Heart left ventricle (tissue), 16 donors: ENCODE measurements at regions of chr1 and their contacts with region 1.

Region 1: DNA sequence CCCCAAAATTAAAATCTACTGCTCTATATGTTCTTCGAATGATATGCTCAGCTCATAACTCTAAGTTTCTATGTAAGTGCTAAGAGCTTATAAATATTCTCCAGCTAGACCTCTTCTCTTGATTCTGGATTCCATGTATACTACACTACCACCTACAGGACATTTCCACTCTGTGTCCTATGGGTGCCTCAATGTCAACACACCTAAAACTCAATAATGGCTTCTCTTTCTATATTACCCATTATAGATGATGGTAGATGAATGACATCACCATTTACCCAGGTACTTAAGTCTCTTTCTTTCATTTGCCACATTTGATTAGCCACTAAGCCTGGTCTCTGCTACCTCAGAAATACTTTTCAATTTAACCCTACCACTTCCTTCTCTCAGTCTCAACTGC is 41.3 kb downstream of the TBX19 start:
- DNase-seq: no peak
- ATAC-seq: peak in 2 of 4 donors; percentile 48 to 53
- H3K4me3 ChIP-seq: no peak overlapping the region
- H3K27ac ChIP-seq: no peak overlapping the region
- H3K4me1 ChIP-seq: peaks cover 0 to 12% (median 0%) of the 10 kb centered on the region in 12 donors
- H3K27me3 ChIP-seq: no peaks in the 10 kb centered on the region
- CTCF ChIP-seq: peak in 10 of 12 donors; percentile 14 to 45 (median 31)
- POLR2A ChIP-seq: no peak

Region 2: GRCh38 chr1:168092566-168093355 is 229.2 kb before region 1 on chr1:
- intact Hi-C with region 1: loop called in 3 of 10 experiments (anchors 5 to 10 kb)
- DNase-seq: no peak
- ATAC-seq: peak in 1 of 4 donors; percentile 45
- H3K4me3 ChIP-seq: no peak overlapping the region
- H3K27ac ChIP-seq: no peak overlapping the region
- H3K4me1 ChIP-seq: peaks cover 0 to 7% (median 0%) of the 10 kb centered on the region in 12 donors
- H3K27me3 ChIP-seq: no peaks in the 10 kb centered on the region
- CTCF ChIP-seq: peak in 8 of 12 donors; percentile 8 to 44 (median 26)
- POLR2A ChIP-seq: no peak

Region 3: DNA sequence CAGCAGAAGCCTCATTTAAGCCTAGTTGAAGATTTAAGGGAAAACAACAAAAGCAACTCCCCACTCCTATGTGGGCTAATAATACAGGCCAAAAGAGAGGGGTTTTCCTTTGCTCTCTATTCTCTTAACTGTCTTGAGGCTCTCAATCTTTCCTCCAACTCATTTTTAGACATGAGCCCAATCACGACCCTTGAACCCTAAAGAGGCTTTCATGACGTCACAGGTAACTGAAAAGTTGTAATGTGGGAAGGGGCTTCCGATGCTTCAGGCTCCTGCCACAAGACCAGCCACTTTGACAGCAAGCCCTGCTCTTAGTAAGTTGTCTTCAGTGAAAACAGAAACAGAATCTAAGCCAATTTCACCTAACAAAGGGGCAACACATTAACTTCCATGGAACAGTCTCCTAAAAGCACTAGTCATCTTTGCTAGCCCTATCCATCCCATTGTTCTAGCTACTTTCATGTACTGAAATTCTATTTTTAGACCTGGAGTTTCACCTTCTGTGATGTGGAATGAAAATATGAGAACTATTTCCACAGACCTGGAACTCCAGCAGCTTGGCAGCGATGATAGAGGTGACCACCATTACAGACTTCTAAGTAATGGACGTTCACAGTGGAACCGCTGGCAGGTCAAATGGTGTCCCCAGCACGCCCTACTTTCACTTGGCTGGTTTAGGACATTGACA is 221.5 kb before region 1 on chr1:
- intact Hi-C with region 1: loop called in 2 of 10 experiments (anchors 10 kb)
- DNase-seq: no peak
- ATAC-seq: no peak
- H3K4me3 ChIP-seq: no peak overlapping the region
- H3K27ac ChIP-seq: no peak overlapping the region
- H3K4me1 ChIP-seq: no peaks in the 10 kb centered on the region
- H3K27me3 ChIP-seq: no peaks in the 10 kb centered on the region
- CTCF ChIP-seq: no peak
- POLR2A ChIP-seq: no peak

Region 4: GRCh38 chr1:168121401-168122011 is 200.4 kb before region 1 on chr1:
- intact Hi-C with region 1: no loop called
- DNase-seq: peak; percentile 77 to 89 (median 86)
- ATAC-seq: peak; percentile 82 to 94 (median 93)
- H3K4me3 ChIP-seq: no peak overlapping the region
- H3K27ac ChIP-seq: peak overlapping the region in 10 of 12 donors; percentile 13 to 71 (median 50)
- H3K4me1 ChIP-seq: peaks cover 0 to 22% (median 11%) of the 10 kb centered on the region in 12 donors
- H3K27me3 ChIP-seq: no peaks in the 10 kb centered on the region
- CTCF ChIP-seq: no peak
- POLR2A ChIP-seq: no peak